ENCODE measurements at regions of chr4 and their contacts with region 1.

Region 1: DNA sequence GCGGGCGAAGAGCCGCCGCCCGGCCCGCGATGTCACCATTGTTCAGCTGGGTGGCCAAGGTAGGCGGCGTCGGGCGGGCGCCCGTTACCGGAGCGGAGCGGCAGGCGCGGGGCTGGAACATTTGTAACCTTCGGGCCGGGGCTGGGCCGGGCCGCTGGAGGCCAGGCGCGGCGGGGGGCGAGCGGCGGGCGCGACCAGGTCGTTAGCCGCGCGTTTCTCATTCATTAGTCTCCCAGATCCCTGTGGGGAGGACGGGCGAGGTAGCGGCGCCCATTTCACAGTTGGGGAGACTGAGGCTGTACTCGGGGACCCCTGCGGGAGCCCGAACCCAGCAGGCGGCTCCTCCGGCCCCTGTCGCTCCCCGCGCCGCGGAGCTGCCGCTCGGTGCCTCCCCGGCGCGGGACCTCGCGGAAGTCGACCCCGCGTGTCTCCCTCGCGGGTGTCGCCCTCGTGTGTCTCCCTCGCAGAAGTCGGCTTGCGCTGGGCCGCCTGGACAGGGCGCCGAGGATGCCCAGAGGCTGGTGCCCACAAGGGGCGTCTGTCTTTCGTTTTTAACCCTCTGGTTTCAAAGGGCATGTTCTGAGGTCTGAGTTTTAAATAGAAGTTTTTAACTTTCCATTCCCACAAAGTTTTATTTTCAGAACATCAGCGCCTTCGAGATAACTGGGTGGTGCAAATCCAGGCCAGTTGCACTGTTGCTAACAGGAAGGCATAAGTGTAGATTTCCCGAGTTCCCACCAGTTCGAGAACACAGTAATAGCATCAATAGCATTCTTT is 17.5 kb downstream of the PTTG2 start:
- DNase-seq: peak; percentile 58 to 91 (median 72)
- ATAC-seq: peak; percentile 79
- H3K4me3 ChIP-seq: peak overlapping the region; percentile 50
- H3K4me3 Mint-ChIP-seq: peak overlapping the region; percentile 91
- H3K27ac ChIP-seq: peak overlapping the region; percentile 33 to 74
- H3K27ac Mint-ChIP-seq: peak overlapping the region; percentile 84
- H3K4me1 ChIP-seq: peaks cover 17% of the 10 kb centered on the region
- H3K4me1 Mint-ChIP-seq: peaks cover 35% of the 10 kb centered on the region
- H3K27me3 ChIP-seq: no peaks in the 10 kb centered on the region
- H3K27me3 Mint-ChIP-seq: no peaks in the 10 kb centered on the region
- CTCF ChIP-seq: peak; percentile 73

Region 2: GRCh38 chr4:37603070-37603468 is 374.6 kb before region 1 on chr4:
- CTCF ChIA-PET with region 1: no interaction called
- POLR2A ChIA-PET with region 1: no interaction called
- intact Hi-C with region 1: loop called in 1 of 2 experiments (anchors 10 kb)
- DNase-seq: peak; percentile 57 to 83 (median 72)
- ATAC-seq: peak; percentile 61
- H3K4me3 ChIP-seq: no peak overlapping the region
- H3K4me3 Mint-ChIP-seq: no peak overlapping the region
- H3K27ac ChIP-seq: no peak overlapping the region
- H3K27ac Mint-ChIP-seq: no peak overlapping the region
- H3K4me1 ChIP-seq: peaks cover 8% of the 10 kb centered on the region
- H3K4me1 Mint-ChIP-seq: peaks cover 4% of the 10 kb centered on the region
- H3K27me3 ChIP-seq: no peaks in the 10 kb centered on the region
- H3K27me3 Mint-ChIP-seq: no peaks in the 10 kb centered on the region
- CTCF ChIP-seq: peak; percentile 98

Region 3: GRCh38 chr4:37802068-37802666 is 175.5 kb before region 1 on chr4:
- CTCF ChIA-PET with region 1: no interaction called
- POLR2A ChIA-PET with region 1: no interaction called
- intact Hi-C with region 1: loop called (anchors 1 to 2 kb)
- DNase-seq: peak in 1 of 14 experiments; percentile 11
- ATAC-seq: no peak
- H3K4me3 ChIP-seq: no peak overlapping the region
- H3K4me3 Mint-ChIP-seq: no peak overlapping the region
- H3K27ac ChIP-seq: no peak overlapping the region
- H3K27ac Mint-ChIP-seq: no peak overlapping the region
- H3K4me1 ChIP-seq: no peaks in the 10 kb centered on the region
- H3K4me1 Mint-ChIP-seq: no peaks in the 10 kb centered on the region
- H3K27me3 ChIP-seq: no peaks in the 10 kb centered on the region
- H3K27me3 Mint-ChIP-seq: no peaks in the 10 kb centered on the region
- CTCF ChIP-seq: no peak

Region 4: GRCh38 chr4:37826295-37827029 is 151.2 kb before region 1 on chr4 and contains the start of gene PGM2:
- CTCF ChIA-PET with region 1: no interaction called
- POLR2A ChIA-PET with region 1: interaction called, 10 read pairs
- intact Hi-C with region 1: loop called (anchors 5 kb)
- DNase-seq: peak; percentile 79 to 94 (median 88)
- ATAC-seq: peak; percentile 98
- H3K4me3 ChIP-seq: peak within 1 kb of the TSS; percentile 98
- H3K4me3 Mint-ChIP-seq: peak within 1 kb of the TSS; percentile 91
- H3K27ac ChIP-seq: peak within 1 kb of the TSS; percentile 35 to 63
- H3K27ac Mint-ChIP-seq: peak within 1 kb of the TSS; percentile 91
- H3K4me1 ChIP-seq: peaks cover 27% of the 10 kb centered on the region
- H3K4me1 Mint-ChIP-seq: peaks cover 73% of the 10 kb centered on the region
- H3K27me3 ChIP-seq: no peaks in the 10 kb centered on the region
- H3K27me3 Mint-ChIP-seq: no peaks in the 10 kb centered on the region
- CTCF ChIP-seq: no peak
- total RNA-seq, gene PGM2: 10.7 to 11.8 TPM

Region 5: GRCh38 chr4:37891260-37892159 is 86.1 kb before region 1 on chr4:
- CTCF ChIA-PET with region 1: interaction called, 3 read pairs
- POLR2A ChIA-PET with region 1: interaction called, 12 read pairs
- intact Hi-C with region 1: loop called (anchors 2 to 5 kb)
- DNase-seq: peak in 13 of 14 experiments; percentile 13 to 76 (median 41)
- ATAC-seq: peak; percentile 63
- H3K4me3 ChIP-seq: peak overlapping the region; percentile 59
- H3K4me3 Mint-ChIP-seq: peak overlapping the region; percentile 97
- H3K27ac ChIP-seq: peak overlapping the region; percentile 20 to 66
- H3K27ac Mint-ChIP-seq: peak overlapping the region; percentile 94
- H3K4me1 ChIP-seq: peaks cover 40% of the 10 kb centered on the region
- H3K4me1 Mint-ChIP-seq: peaks cover 48% of the 10 kb centered on the region
- H3K27me3 ChIP-seq: no peaks in the 10 kb centered on the region
- H3K27me3 Mint-ChIP-seq: no peaks in the 10 kb centered on the region
- CTCF ChIP-seq: no peak

Region 6: DNA sequence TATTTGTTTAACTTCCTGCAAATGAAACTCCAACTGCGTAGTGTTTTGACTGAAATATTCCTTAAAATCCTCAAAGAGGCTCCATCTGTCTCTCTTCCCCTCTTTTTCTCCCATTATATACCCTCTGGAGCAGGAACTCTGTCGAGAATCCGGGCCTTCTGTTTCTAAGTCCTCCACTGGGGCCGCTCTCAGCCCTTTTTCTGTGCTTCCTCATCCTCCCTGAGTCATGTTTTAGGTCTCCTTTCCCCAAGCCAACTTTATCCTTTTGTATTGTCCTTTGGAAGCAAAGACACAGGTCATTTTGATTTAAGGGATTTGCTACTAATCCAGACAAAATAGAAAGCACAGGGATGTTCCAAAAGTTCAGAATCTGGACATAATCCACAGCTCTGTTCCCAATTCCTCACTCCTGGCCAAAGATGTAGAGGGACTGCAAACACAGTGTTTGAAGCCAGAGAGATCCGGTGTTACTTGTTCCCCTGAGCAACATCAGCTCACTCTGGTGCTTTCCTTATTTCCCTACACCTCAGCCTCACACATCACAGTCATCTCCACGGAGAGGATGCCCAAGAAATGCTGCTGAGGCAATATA is 555.3 kb after region 1 on chr4:
- CTCF ChIA-PET with region 1: no interaction called
- POLR2A ChIA-PET with region 1: no interaction called
- intact Hi-C with region 1: no loop called
- DNase-seq: no peak
- ATAC-seq: no peak
- H3K4me3 ChIP-seq: no peak overlapping the region
- H3K4me3 Mint-ChIP-seq: no peak overlapping the region
- H3K27ac ChIP-seq: no peak overlapping the region
- H3K27ac Mint-ChIP-seq: no peak overlapping the region
- H3K4me1 ChIP-seq: peaks cover 26% of the 10 kb centered on the region
- H3K4me1 Mint-ChIP-seq: peaks cover 35% of the 10 kb centered on the region
- H3K27me3 ChIP-seq: no peaks in the 10 kb centered on the region
- H3K27me3 Mint-ChIP-seq: no peaks in the 10 kb centered on the region
- CTCF ChIP-seq: no peak

Region 7: GRCh38 chr4:39353478-39354253 is 1376.0 kb after region 1 on chr4:
- CTCF ChIA-PET with region 1: no interaction called
- POLR2A ChIA-PET with region 1: no interaction called
- intact Hi-C with region 1: loop called in 1 of 2 experiments (anchors 10 kb)
- DNase-seq: peak in 3 of 14 experiments; percentile 71 to 81 (median 72)
- ATAC-seq: peak; percentile 77
- H3K4me3 ChIP-seq: peak overlapping the region; percentile 53
- H3K4me3 Mint-ChIP-seq: peak overlapping the region; percentile 88
- H3K27ac ChIP-seq: peak overlapping the region; percentile 75 to 88
- H3K27ac Mint-ChIP-seq: peak overlapping the region; percentile 97
- H3K4me1 ChIP-seq: peaks cover 20% of the 10 kb centered on the region
- H3K4me1 Mint-ChIP-seq: peaks cover 67% of the 10 kb centered on the region
- H3K27me3 ChIP-seq: no peaks in the 10 kb centered on the region
- H3K27me3 Mint-ChIP-seq: no peaks in the 10 kb centered on the region
- CTCF ChIP-seq: no peak